ENCODE measurements at regions of chr19 and their contacts with region 1.

Region 1: GRCh38 chr19:57578487-57579205 is at the start of gene ZNF416:
- DNase-seq: peak; percentile 94 to 98 (median 97)
- H3K4me3 ChIP-seq: peak within 1 kb of the TSS; percentile 53 to 73
- H3K4me3 Mint-ChIP-seq: peak within 1 kb of the TSS; percentile 84 to 88 (median 88)
- H3K27ac ChIP-seq: peak within 1 kb of the TSS; percentile 68
- H3K27ac Mint-ChIP-seq: peak within 1 kb of the TSS; percentile 78 to 92 (median 86)
- H3K4me1 ChIP-seq: peaks cover 24% of the 10 kb centered on the region
- H3K4me1 Mint-ChIP-seq: peaks cover 17 to 36% (median 20%) of the 10 kb centered on the region in 4 donors
- H3K27me3 ChIP-seq: no peaks in the 10 kb centered on the region
- H3K27me3 Mint-ChIP-seq: no peaks in the 10 kb centered on the region
- total RNA-seq, gene ZNF416: 12.0 to 13.9 TPM

Region 2: GRCh38 chr19:57389730-57390598 is 188.7 kb before region 1 on chr19 and contains the start of gene ZNF548:
- CTCF ChIA-PET with region 1: no interaction called
- POLR2A ChIA-PET with region 1: interaction called, 7 read pairs
- intact Hi-C with region 1: loop called (anchors 1 kb)
- DNase-seq: peak; percentile 93 to 100 (median 95)
- H3K4me3 ChIP-seq: peak within 1 kb of the TSS; percentile 52 to 62
- H3K4me3 Mint-ChIP-seq: peak within 1 kb of the TSS; percentile 97 to 99 (median 98)
- H3K27ac ChIP-seq: peak within 1 kb of the TSS; percentile 95
- H3K27ac Mint-ChIP-seq: peak within 1 kb of the TSS; percentile 98 to 100 (median 99)
- H3K4me1 ChIP-seq: peaks cover 22% of the 10 kb centered on the region
- H3K4me1 Mint-ChIP-seq: peaks cover 22 to 41% (median 31%) of the 10 kb centered on the region in 4 donors
- H3K27me3 ChIP-seq: no peaks in the 10 kb centered on the region
- H3K27me3 Mint-ChIP-seq: peaks cover 0 to 3% of the 10 kb centered on the region in 2 donors
- total RNA-seq, gene ZNF548: 85.4 to 103 TPM

Region 3: GRCh38 chr19:57559404-57560025 is 19.1 kb before region 1 on chr19 and contains the start of gene ZNF550:
- CTCF ChIA-PET with region 1: no interaction called
- POLR2A ChIA-PET with region 1: no interaction called
- intact Hi-C with region 1: loop called (anchors 1 kb)
- DNase-seq: peak; percentile 83 to 86 (median 84)
- H3K4me3 ChIP-seq: peak within 1 kb of the TSS; percentile 44 to 84
- H3K4me3 Mint-ChIP-seq: peak within 1 kb of the TSS; percentile 91 to 99 (median 98)
- H3K27ac ChIP-seq: peak within 1 kb of the TSS; percentile 63
- H3K27ac Mint-ChIP-seq: peak within 1 kb of the TSS; percentile 70 to 97 (median 95)
- H3K4me1 ChIP-seq: peaks cover 22% of the 10 kb centered on the region
- H3K4me1 Mint-ChIP-seq: peaks cover 20 to 47% (median 29%) of the 10 kb centered on the region in 4 donors
- H3K27me3 ChIP-seq: no peaks in the 10 kb centered on the region
- H3K27me3 Mint-ChIP-seq: peaks cover 0 to 1% of the 10 kb centered on the region in 2 donors
- total RNA-seq, gene ZNF550: 37.0 to 37.8 TPM

Region 4: GRCh38 chr19:57632987-57633831 is 54.6 kb after region 1 on chr19 and contains the start of gene ZNF211:
- CTCF ChIA-PET with region 1: no interaction called
- POLR2A ChIA-PET with region 1: interaction called, 5 read pairs
- intact Hi-C with region 1: loop called (anchors 2 kb)
- DNase-seq: peak; percentile 86 to 91 (median 88)
- H3K4me3 ChIP-seq: peak within 1 kb of the TSS; percentile 84 to 87
- H3K4me3 Mint-ChIP-seq: peak within 1 kb of the TSS; percentile 94 to 98 (median 96)
- H3K27ac ChIP-seq: peak within 1 kb of the TSS; percentile 81
- H3K27ac Mint-ChIP-seq: peak within 1 kb of the TSS; percentile 83 to 96 (median 94)
- H3K4me1 ChIP-seq: peaks cover 19% of the 10 kb centered on the region
- H3K4me1 Mint-ChIP-seq: peaks cover 18 to 35% (median 27%) of the 10 kb centered on the region in 4 donors
- H3K27me3 ChIP-seq: no peaks in the 10 kb centered on the region
- H3K27me3 Mint-ChIP-seq: no peaks in the 10 kb centered on the region
- total RNA-seq, gene ZNF211: 48.7 to 53.3 TPM

Region 5: GRCh38 chr19:57648331-57649003 is 69.8 kb after region 1 on chr19:
- CTCF ChIA-PET with region 1: no interaction called
- POLR2A ChIA-PET with region 1: no interaction called
- intact Hi-C with region 1: no loop called
- DNase-seq: no peak
- H3K4me3 ChIP-seq: no peak overlapping the region
- H3K4me3 Mint-ChIP-seq: peak overlapping the region in 1 of 8 donors; percentile 39
- H3K27ac ChIP-seq: no peak overlapping the region
- H3K27ac Mint-ChIP-seq: no peak overlapping the region
- H3K4me1 ChIP-seq: no peaks in the 10 kb centered on the region
- H3K4me1 Mint-ChIP-seq: peaks cover 5 to 11% (median 8%) of the 10 kb centered on the region in 4 donors
- H3K27me3 ChIP-seq: no peaks in the 10 kb centered on the region
- H3K27me3 Mint-ChIP-seq: peaks cover 3 to 6% of the 10 kb centered on the region in 2 donors

Region 6: DNA sequence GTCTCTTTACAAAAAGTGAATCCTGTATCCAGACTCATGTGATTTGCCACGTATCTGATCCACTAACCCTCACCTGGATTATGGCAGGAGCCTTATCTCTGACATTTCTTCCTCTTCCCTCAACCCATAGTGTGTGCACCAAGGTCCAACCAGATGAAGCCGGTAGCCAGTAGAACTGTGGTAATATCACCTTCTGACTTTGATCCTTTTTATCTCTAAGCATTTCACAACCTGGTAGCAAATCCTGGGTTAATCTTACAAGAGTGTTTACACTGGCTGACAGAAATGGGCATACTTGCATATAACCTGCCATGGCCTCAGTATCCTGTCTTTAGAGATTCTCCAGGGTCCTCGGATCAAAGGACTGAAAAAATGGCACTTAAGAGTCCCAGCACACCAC is 335.9 kb after region 1 on chr19:
- CTCF ChIA-PET with region 1: no interaction called
- POLR2A ChIA-PET with region 1: no interaction called
- intact Hi-C with region 1: loop called (anchors 1 kb)
- DNase-seq: no peak
- H3K4me3 ChIP-seq: no peak overlapping the region
- H3K4me3 Mint-ChIP-seq: peak overlapping the region; percentile 53 to 99 (median 97)
- H3K27ac ChIP-seq: no peak overlapping the region
- H3K27ac Mint-ChIP-seq: peak overlapping the region in 6 of 7 donors; percentile 5 to 96 (median 34)
- H3K4me1 ChIP-seq: peaks cover 13% of the 10 kb centered on the region
- H3K4me1 Mint-ChIP-seq: peaks cover 22 to 48% (median 34%) of the 10 kb centered on the region in 4 donors
- H3K27me3 ChIP-seq: no peaks in the 10 kb centered on the region
- H3K27me3 Mint-ChIP-seq: no peaks in the 10 kb centered on the region

Measured in CD4-positive, alpha-beta memory T cell (primary cell).